K562 (cell line): ENCODE measurements at regions of chr11 and their contacts with region 1.

Region 1: GRCh38 chr11:57456960-57457642 is 3.2 kb upstream of the RTN4RL2 start:
- DNase-seq: peak; percentile 78 to 92 (median 79)
- ATAC-seq: peak; percentile 79
- H3K4me3 ChIP-seq: no peak overlapping the region
- H3K27ac ChIP-seq: no peak overlapping the region
- H3K4me1 ChIP-seq: peaks cover 19 to 45% of the 10 kb centered on the region in 2 experiments
- H3K27me3 ChIP-seq: no peaks in the 10 kb centered on the region
- CTCF ChIP-seq: peak; percentile 95 to 98 (median 96)
- EP300 ChIP-seq: no peak
- POLR2A ChIP-seq: no peak
- RAD21 ChIP-seq: peak; percentile 93 to 96

Region 2: DNA sequence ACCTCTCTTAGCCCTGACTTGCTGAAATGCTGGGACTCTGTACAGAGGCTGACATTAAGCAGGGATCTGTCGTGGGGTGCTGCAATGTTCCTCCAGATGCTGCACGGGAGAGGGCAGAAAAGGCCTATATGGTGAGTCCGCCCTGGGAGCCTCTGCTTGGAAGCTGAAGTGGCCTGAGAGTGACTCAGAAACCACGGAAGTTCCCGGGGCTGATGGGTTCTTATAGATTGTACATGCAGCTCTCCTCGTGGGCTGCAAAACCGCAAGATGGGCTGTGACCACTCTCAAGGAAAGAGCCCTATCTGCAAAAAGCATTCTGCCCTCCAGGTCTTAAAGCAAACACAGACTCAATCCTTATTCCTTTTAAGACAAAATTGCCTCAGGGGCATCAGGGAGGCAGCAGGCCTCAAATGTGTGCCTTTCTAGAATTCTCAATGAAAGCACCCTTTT is 24.4 kb before region 1 on chr11:
- CTCF ChIA-PET with region 1: interaction called, 3 read pairs
- POLR2A ChIA-PET with region 1: interaction called, 4 read pairs
- in situ Hi-C with region 1: no loop called
- intact Hi-C with region 1: loop called (anchors 2 kb)
- DNase-seq: peak; percentile 38 to 93 (median 57)
- ATAC-seq: peak; percentile 86
- H3K4me3 ChIP-seq: no peak overlapping the region
- H3K27ac ChIP-seq: peak overlapping the region; percentile 24
- H3K4me1 ChIP-seq: peaks cover 14 to 54% of the 10 kb centered on the region in 2 experiments
- H3K27me3 ChIP-seq: no peaks in the 10 kb centered on the region
- CTCF ChIP-seq: peak in 2 of 3 experiments; percentile 16 to 27; a peak in 1 of 6 replicates
- EP300 ChIP-seq: peak; percentile 73
- POLR2A ChIP-seq: no peak; the same call in 1 of the 2 replicates
- RAD21 ChIP-seq: peak in 1 of 2 experiments; percentile 36; a peak in 2 of 4 replicates

Region 3: DNA sequence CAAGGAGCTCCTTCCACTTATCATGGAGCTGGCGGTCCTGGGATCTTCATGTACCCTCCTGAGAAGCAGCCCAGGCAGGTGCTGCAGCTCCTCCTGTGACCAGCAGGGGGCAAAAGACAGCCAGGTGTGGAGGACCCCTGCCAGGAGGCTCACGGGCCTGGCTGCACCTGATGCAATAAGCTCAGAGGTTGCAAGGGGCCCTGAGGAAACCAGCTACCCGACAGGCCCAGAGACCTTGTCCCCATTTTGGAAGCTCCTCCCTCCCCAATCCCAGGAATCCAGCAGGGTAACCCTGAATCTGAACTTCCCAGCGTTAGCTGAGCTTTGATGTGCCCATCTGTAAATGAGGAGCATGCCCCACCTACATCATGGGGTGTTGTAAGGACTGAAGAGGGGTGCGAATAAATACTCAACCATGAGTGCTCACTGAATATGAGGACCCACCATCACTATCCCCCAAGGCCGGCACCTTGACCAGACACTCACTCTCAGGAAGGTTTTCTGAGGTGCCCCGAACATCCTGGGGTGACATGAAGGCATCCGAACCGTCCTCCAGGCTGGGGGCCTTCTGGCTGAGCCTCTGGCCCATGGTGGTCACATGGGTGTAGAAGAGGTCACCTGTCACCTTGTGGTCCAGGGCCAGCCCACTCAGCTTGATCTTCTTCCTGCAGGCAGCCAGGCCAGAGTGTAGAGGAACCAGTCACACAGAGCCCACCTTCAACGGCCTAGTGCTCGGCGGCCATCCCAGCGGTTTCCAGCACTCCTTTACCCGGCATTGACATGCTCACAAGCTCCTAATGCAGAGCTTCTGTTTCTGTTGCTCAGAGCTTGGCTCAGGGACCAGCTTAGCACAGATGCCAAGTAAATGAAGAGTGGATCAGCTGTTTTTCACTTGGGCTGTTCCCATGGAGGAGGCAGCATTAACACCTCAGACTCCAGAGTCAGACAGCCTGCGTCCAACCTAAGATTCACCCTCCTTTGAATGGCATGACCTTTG is 36.7 kb after region 1 on chr11:
- CTCF ChIA-PET with region 1: interaction called, 3 read pairs
- POLR2A ChIA-PET with region 1: no interaction called
- in situ Hi-C with region 1: no loop called
- intact Hi-C with region 1: loop called (anchors 5 kb)
- DNase-seq: peak; percentile 68 to 78 (median 72)
- ATAC-seq: peak; percentile 89
- H3K4me3 ChIP-seq: no peak overlapping the region
- H3K27ac ChIP-seq: peak overlapping the region; percentile 67
- H3K4me1 ChIP-seq: peaks cover 1 to 7% of the 10 kb centered on the region in 2 experiments; a peak in 3 of 5 replicates
- H3K27me3 ChIP-seq: no peaks in the 10 kb centered on the region
- CTCF ChIP-seq: peak; percentile 78 to 98 (median 80)
- EP300 ChIP-seq: peak; percentile 74
- POLR2A ChIP-seq: no peak
- RAD21 ChIP-seq: peak; percentile 70 to 86

Region 4: DNA sequence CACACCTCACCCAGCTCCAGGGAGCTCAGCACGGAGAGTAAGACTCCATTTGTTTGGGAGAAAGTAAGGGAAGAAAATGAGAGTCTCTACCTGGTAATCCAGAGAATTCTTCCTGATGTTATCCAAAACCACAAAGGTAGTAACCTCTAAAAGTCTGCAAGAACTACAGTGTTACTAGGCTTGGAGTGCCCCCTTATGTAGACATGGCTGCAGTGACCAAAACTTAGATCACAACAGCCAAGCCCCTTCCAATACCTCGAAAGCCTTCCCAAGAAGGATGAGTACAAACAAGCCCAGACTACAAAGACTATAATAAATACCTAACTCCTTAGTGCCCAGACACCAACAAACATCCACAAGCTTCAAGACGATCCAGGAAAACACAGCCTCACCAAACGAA is 105.5 kb after region 1 on chr11:
- CTCF ChIA-PET with region 1: interaction called, 3 read pairs
- POLR2A ChIA-PET with region 1: no interaction called
- in situ Hi-C with region 1: no loop called
- intact Hi-C with region 1: loop called (anchors 1 kb)
- DNase-seq: peak in 1 of 4 experiments; percentile 37
- ATAC-seq: peak; percentile 74
- H3K4me3 ChIP-seq: no peak overlapping the region
- H3K27ac ChIP-seq: no peak overlapping the region
- H3K4me1 ChIP-seq: peaks cover 10 to 11% of the 10 kb centered on the region in 2 experiments; a peak in 4 of 5 replicates
- H3K27me3 ChIP-seq: no peaks in the 10 kb centered on the region; a peak in 1 of 5 replicates
- CTCF ChIP-seq: peak; percentile 28 to 54 (median 51); a peak in 4 of 6 replicates
- EP300 ChIP-seq: no peak
- POLR2A ChIP-seq: no peak
- RAD21 ChIP-seq: peak in 1 of 2 experiments; percentile 72; a peak in 3 of 4 replicates

Region 5: GRCh38 chr11:57644748-57645688 is 187.9 kb after region 1 on chr11:
- CTCF ChIA-PET with region 1: interaction called, 3 read pairs
- POLR2A ChIA-PET with region 1: interaction called, 4 read pairs
- in situ Hi-C with region 1: loop called (anchors 10 kb)
- intact Hi-C with region 1: loop called (anchors 1 kb)
- DNase-seq: peak; percentile 83 to 87 (median 86)
- ATAC-seq: peak; percentile 84
- H3K4me3 ChIP-seq: no peak overlapping the region
- H3K27ac ChIP-seq: no peak overlapping the region
- H3K4me1 ChIP-seq: peaks cover 31 to 34% of the 10 kb centered on the region in 2 experiments
- H3K27me3 ChIP-seq: peaks cover 0 to 15% of the 10 kb centered on the region in 2 experiments; a peak in 2 of 5 replicates
- CTCF ChIP-seq: peak; percentile 80 to 85 (median 82)
- EP300 ChIP-seq: no peak
- POLR2A ChIP-seq: no peak
- RAD21 ChIP-seq: peak; percentile 62 to 70